Motor neuron (in vitro differentiated cells): ENCODE measurements at regions of chr1 and their contacts with region 1.

Region 1: GRCh38 chr1:167066333-167067122 is 23.6 kb downstream of the GPA33 start:
- ATAC-seq: peak; percentile 84 to 99 (median 96)
- H3K4me3 ChIP-seq: peak overlapping the region; percentile 6 to 22 (median 9)
- H3K27ac ChIP-seq: no peak overlapping the region
- H3K4me1 ChIP-seq: peaks cover 0 to 2% of the 10 kb centered on the region in 2 donors

Region 2: GRCh38 chr1:166910396-166910994 is 156.0 kb before region 1 on chr1:
- in situ Hi-C with region 1: loop called in 6 of 9 experiments (anchors 25 kb)
- ATAC-seq: peak; percentile 69 to 100 (median 96)
- H3K4me3 ChIP-seq: no peak overlapping the region
- H3K27ac ChIP-seq: no peak overlapping the region
- H3K4me1 ChIP-seq: no peaks in the 10 kb centered on the region

Region 3: DNA sequence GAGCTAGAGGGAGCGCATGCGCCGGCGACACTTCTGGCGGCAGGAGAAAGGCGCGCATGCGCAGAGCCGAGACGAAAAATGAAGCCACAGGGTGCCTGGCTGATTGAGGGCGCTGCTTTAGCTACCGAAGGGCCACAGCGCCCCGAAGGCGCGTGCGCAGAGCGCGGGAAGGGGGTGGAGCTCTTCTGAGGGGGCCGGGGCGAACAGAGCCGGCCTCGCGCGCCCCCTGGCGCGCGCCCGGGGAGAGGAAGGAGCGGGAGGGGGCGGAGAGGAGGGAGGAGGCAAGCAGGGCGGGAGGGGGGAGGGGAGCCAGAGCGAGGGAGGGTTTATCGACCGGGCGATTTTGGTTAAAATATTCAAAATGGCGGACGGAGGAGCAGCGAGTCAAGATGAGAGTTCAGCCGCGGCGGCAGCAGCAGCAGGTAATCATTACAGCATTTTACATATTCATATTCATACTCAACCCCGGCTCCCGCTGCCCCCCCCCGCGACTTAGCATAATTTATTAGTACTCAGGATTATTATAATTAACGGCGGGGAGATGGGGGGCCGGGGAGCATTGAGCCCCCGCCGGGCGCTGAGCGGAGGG is 154.1 kb after region 1 on chr1 and contains the start of gene POU2F1:
- in situ Hi-C with region 1: loop called in 1 of 9 experiments (anchors 25 kb)
- ATAC-seq: peak; percentile 49 to 74 (median 67)
- H3K4me3 ChIP-seq: peak within 1 kb of the TSS; percentile 68 to 75 (median 71)
- H3K27ac ChIP-seq: peak within 1 kb of the TSS; percentile 96 to 97
- H3K4me1 ChIP-seq: peaks cover 16 to 31% of the 10 kb centered on the region in 2 donors
- total RNA-seq, gene POU2F1: 11.4 to 29.7 (median 20.2) TPM

Region 4: DNA sequence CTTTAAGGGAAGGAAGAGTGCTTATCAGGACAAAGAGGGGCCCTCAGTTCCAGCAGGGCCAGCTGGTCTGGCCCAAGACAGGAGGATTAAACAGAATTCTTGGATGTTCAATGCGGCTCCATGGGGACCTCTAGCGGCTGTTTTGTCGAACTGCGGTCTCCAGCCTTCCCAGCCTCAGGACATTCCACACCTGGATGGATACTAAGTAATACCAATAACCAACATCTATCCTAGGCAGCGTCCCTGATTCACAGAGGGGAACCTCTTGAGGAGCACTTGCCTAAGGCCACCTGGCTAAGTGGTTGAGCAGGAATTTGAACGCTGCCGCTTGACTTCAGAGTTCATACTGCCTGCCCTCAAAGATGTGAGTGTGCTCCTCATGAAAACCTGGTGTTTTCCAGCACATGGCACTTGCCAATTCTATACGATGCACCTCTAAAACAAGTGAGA is 467.3 kb after region 1 on chr1:
- in situ Hi-C with region 1: loop called in 3 of 9 experiments (anchors 25 kb)
- ATAC-seq: peak; percentile 79 to 95 (median 86)
- H3K4me3 ChIP-seq: no peak overlapping the region
- H3K27ac ChIP-seq: no peak overlapping the region
- H3K4me1 ChIP-seq: peaks cover 2 to 6% of the 10 kb centered on the region in 2 donors

Region 5: DNA sequence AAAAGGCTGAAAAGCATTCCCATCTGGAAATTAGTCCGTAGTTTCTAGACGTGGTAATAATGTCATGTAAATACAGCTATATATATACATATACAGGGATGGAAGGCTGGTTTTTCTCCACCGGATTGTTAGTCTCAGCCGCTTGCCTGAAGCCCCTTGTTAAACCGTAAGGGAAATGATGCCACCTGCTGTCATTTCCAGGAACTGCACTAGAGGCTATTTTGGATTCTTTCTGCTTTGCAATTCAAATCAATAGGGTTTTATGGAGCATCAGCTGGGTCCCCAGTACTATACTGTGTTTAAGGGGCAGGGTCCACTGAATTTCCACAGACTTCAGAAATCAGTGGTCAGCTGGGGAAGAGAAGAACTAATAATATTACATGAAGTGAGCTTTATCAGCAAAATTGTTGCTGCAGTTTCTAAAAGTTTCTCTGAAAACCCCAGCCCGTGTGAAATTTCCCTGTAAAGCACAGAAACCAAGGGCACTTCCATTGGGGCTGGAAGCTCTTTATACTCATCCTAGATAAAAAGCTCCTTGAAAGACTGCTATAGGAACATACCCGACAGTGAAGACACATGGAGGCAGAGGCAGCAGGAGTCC is 621.5 kb after region 1 on chr1:
- in situ Hi-C with region 1: loop called in 2 of 9 experiments (anchors 25 kb)
- ATAC-seq: peak; percentile 47 to 91 (median 82)
- H3K4me3 ChIP-seq: no peak overlapping the region
- H3K27ac ChIP-seq: no peak overlapping the region
- H3K4me1 ChIP-seq: peaks cover under 1 to 4% of the 10 kb centered on the region in 2 donors